ENCODE measurements at regions of chr1 and their contacts with region 1.

Region 1: GRCh38 chr1:215606564-215607168 is 39.6 kb downstream of the KCTD3 start:
- DNase-seq: no peak
- H3K4me3 ChIP-seq: no peak overlapping the region
- H3K27ac ChIP-seq: no peak overlapping the region
- H3K4me1 ChIP-seq: no peaks in the 10 kb centered on the region
- H3K27me3 ChIP-seq: no peaks in the 10 kb centered on the region
- CTCF ChIP-seq: peak; percentile 48 to 49

Region 2: GRCh38 chr1:215543191-215543606 is 63.5 kb before region 1 on chr1:
- CTCF ChIA-PET with region 1: no interaction called
- dilution Hi-C with region 1: no loop called
- in situ Hi-C with region 1: no loop called
- intact Hi-C with region 1: no loop called
- DNase-seq: peak; percentile 83
- H3K4me3 ChIP-seq: no peak overlapping the region
- H3K27ac ChIP-seq: no peak overlapping the region
- H3K4me1 ChIP-seq: peaks cover 12% of the 10 kb centered on the region
- H3K27me3 ChIP-seq: no peaks in the 10 kb centered on the region
- CTCF ChIP-seq: no peak

Region 3: GRCh38 chr1:215566556-215567490 is 39.8 kb before region 1 on chr1 and contains the start of gene KCTD3:
- CTCF ChIA-PET with region 1: no interaction called
- dilution Hi-C with region 1: no loop called
- in situ Hi-C with region 1: no loop called
- intact Hi-C with region 1: loop called (anchors 1 kb)
- DNase-seq: peak; percentile 65
- H3K4me3 ChIP-seq: peak within 1 kb of the TSS; percentile 82 to 92 (median 91)
- H3K27ac ChIP-seq: peak within 1 kb of the TSS; percentile 81
- H3K4me1 ChIP-seq: peaks cover 21% of the 10 kb centered on the region
- H3K27me3 ChIP-seq: no peaks in the 10 kb centered on the region
- CTCF ChIP-seq: no peak
- total RNA-seq, gene KCTD3: 31.7 to 38.6 TPM

Measured in mammary epithelial cell (primary cell).